Right ventricle myocardium superior (tissue), 1 donor: ENCODE measurements at regions of chr5 and their contacts with region 1.

Region 1: DNA sequence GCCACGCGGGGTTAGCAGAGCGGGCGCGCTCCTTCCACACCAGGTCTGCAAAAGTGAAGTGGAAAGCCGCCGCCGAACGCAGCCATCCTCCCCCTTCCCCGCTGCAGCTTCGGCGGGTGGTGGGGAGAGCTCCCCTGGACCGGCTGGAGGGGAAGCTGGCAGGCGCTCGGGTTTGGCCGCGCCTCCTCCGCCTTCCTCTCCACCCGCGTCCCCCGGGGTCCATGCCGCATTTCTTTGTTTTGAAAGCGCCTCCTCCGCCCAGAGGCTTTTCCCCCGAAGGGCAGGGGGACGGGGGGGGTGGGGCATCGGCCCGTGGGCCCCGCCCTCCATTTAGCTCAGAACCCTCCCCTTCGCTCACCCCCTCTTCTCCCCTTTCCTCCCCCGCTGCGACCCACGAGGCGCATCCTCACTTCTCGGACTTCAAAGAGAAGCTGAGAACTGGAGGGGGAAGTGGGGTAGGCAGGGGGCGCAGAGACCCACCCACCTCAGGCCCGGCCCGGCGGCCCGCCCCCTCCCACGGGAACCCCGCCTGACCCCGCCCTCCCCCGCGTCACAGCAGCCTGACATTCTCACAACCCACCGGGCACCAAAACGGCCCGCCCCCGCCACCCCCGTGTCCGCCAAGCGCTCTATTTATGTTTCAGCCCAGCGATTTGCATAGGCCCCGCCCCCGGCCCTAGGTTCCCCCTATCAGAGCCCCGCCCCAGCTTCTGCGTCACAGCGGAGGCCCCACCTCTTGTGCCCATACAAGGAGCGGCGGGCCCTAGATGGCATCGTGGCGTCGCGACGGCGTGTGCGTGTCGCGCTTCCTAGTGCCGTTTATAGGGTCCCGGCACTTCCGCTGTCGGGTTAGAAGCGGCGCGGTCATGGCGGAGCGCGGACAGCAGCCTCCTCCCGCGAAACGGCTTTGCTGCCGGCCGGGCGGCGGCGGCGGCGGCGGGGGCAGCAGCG is at the start of gene ZSWIM6:
- DNase-seq: peak; percentile 100
- ATAC-seq: peak; percentile 90
- total RNA-seq, gene ZSWIM6: 6.6 TPM

Region 2: DNA sequence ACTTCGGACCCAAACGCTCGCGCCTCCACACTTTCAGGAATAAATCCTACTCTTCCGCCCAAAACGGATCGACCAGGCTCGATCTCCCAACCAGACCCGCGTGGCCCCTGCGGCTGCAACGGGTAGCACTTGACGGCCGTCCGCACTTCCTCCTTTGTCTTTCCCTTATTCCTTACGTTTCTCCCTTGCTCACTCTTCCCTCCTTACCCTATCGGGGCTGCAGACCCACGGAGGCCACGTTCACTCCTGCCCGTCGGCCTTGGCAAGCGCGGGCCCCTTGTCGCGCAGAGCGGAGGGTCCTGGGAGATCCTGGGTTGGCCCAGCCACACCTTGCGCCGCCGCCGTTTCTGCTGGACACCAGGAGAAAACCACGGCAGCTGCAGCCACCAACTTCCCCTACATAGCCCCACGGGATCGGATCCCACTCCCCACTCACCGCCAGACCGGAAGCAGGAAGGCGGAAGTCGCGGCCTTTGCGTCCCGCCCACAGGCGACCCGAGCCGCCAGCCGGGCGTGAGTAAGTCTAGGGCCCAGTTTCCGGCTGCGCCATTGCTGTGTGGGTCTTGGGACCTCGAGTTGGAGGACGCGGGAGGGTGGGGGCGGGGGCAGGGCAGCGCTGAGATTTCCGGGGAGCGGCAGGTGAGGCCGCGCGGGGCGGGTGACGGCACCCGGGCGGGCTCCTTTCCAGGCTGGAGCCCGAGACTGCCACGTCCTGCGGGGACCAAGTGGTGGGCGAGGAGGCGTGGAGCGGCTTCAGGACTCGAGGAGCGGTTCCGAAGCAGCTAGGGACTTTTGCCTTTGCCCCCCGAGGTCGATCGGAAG is 169.5 kb before region 1 on chr5 and contains the start of gene SMIM15:
- intact Hi-C with region 1: loop called (anchors 5 kb)
- DNase-seq: peak; percentile 95
- ATAC-seq: peak; percentile 98
- total RNA-seq, gene SMIM15: 19.2 TPM

Region 3: GRCh38 chr5:61408476-61409168 is 76.9 kb after region 1 on chr5:
- intact Hi-C with region 1: loop called (anchors 5 kb)
- DNase-seq: peak; percentile 100
- ATAC-seq: peak; percentile 100

Region 4: GRCh38 chr5:61625681-61626621 is 294.3 kb after region 1 on chr5:
- intact Hi-C with region 1: loop called (anchors 5 kb)
- DNase-seq: peak; percentile 90
- ATAC-seq: peak; percentile 98

Region 5: GRCh38 chr5:61658592-61659008 is 326.9 kb after region 1 on chr5:
- intact Hi-C with region 1: loop called (anchors 2 kb)
- DNase-seq: peak; percentile 90
- ATAC-seq: peak; percentile 94